Right cardiac atrium (tissue), 5 donors: ENCODE measurements at regions of chr16 and their contacts with region 1.

Region 1: DNA sequence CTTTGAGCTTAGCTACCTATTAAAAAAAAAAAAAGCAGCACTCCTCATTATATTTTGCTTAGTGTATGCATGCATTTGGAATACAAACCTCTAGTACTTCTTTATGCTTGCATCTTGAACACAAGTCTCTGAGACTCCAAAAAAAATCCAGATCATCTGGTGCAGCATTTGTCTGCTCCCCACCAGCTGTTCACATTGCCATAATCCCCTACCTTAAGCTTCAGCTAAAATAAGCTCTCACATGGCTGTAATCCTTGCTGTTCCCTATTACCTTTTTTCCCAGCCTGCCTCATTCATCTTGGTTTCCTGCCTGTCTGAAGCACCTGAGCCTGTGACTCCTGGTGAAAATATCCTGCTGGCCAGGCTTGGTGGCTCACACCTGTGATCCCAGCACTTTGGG is 7.5 kb upstream of the NFATC2IP start:
- DNase-seq: no peak
- ATAC-seq: no peak
- H3K4me3 ChIP-seq: no peak overlapping the region
- H3K27ac ChIP-seq: no peak overlapping the region
- H3K4me1 ChIP-seq: no peaks in the 10 kb centered on the region
- H3K27me3 ChIP-seq: no peaks in the 10 kb centered on the region

Region 2: GRCh38 chr16:28823872-28824716 is 119.2 kb before region 1 on chr16:
- intact Hi-C with region 1: loop called in 1 of 4 experiments (anchors 5 kb)
- DNase-seq: peak; percentile 98 to 99 (median 99)
- ATAC-seq: peak; percentile 95 to 96
- H3K4me3 ChIP-seq: peak overlapping the region; percentile 99
- H3K27ac ChIP-seq: peak overlapping the region; percentile 96
- H3K4me1 ChIP-seq: no peaks in the 10 kb centered on the region
- H3K27me3 ChIP-seq: no peaks in the 10 kb centered on the region

Region 3: GRCh38 chr16:28879841-28880588 is 63.3 kb before region 1 on chr16:
- intact Hi-C with region 1: loop called in 2 of 4 experiments (anchors 10 kb)
- DNase-seq: peak; percentile 89 to 96 (median 96)
- ATAC-seq: peak; percentile 94 to 95
- H3K4me3 ChIP-seq: peak overlapping the region; percentile 73
- H3K27ac ChIP-seq: no peak overlapping the region
- H3K4me1 ChIP-seq: peaks cover 3% of the 10 kb centered on the region
- H3K27me3 ChIP-seq: no peaks in the 10 kb centered on the region

Region 4: DNA sequence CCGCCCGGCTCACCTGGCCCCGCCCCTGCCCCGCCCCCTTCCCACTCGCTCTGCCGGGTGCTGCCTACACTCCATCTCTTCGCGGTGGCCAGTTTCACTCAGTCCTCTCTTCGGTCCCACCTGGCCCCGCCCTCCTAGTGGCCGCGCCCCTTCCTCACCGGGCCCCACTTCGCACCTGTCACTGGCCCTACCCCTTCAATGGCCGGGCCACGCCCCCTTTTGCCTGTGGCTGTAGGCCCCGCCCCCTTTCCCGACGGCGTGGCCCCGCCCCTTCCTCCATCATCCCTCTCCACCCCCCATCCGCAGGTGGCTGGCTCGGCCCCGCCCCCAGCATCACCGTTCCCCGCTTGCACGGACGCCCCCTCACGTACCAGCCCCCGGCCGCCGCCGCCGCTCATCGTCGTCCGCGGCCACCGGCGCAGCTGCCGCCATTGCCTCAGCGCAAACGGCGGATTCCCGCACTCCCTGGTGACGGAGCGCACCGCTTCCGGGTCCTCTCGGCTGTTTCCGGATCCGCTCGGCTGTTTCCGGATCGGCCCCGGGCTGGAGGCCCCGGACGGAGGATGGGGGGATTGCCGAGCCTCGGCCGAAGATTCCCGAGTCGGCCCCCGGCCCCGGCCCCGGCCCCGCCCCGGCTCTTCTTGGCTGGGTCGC is 18.4 kb before region 1 on chr16 and contains the start of gene RABEP2:
- intact Hi-C with region 1: loop called in 1 of 4 experiments (anchors 2 kb)
- DNase-seq: peak; percentile 93 to 99 (median 97)
- ATAC-seq: peak; percentile 95 to 96
- H3K4me3 ChIP-seq: peak within 1 kb of the TSS; percentile 74
- H3K27ac ChIP-seq: peak within 1 kb of the TSS; percentile 97
- H3K4me1 ChIP-seq: no peaks in the 10 kb centered on the region
- H3K27me3 ChIP-seq: no peaks in the 10 kb centered on the region
- total RNA-seq, gene RABEP2: 13.4 to 24.3 (median 19.2) TPM

Region 5: DNA sequence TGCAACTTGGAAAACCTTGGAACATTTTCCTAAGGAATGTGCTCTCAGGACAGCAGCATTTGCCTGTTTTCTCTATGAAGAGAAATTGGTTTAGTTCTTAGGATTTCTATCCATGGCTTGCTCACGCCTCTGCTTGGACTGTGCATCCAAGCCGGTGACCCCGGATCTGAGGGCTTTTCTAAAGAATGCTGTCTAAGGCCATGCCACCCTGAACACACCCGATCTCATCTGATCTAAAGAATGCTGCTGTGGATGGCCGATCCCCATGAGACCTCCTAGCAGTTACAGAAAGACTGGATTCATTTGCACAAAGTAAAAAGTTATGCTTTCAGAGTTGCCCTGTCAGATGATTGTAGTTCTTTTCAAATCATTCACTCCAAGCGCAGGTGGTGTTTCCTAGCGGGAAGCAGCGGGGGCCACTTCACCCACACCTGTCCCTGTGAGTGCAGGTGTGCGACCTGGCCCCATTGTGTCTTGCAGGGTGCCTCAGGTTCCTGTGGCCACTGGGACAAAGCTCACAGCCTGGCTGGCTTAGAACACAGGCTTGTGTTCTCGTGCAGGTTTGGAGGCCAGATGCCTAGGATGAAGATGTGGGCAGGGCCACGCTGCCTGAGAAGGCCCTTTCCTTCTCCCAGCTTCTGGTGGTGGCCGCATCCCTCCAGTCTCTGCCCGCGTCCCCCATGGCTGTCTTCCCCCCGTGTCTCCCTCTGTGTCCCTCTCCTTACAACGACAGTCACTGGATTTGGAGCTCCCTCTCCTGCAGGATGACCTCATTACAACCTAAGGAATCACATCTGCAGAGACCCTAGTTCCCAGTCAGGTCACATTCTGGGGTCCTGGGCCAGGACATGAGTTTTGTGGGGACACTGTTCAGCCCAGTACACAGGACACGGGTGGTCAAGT is 372.6 kb after region 1 on chr16:
- intact Hi-C with region 1: no loop called
- DNase-seq: no peak
- ATAC-seq: no peak
- H3K4me3 ChIP-seq: no peak overlapping the region
- H3K27ac ChIP-seq: no peak overlapping the region
- H3K4me1 ChIP-seq: peaks cover 3% of the 10 kb centered on the region
- H3K27me3 ChIP-seq: no peaks in the 10 kb centered on the region